IMR-90 (cell line): ENCODE measurements at regions of chr2 and their contacts with region 1.

Region 1: DNA sequence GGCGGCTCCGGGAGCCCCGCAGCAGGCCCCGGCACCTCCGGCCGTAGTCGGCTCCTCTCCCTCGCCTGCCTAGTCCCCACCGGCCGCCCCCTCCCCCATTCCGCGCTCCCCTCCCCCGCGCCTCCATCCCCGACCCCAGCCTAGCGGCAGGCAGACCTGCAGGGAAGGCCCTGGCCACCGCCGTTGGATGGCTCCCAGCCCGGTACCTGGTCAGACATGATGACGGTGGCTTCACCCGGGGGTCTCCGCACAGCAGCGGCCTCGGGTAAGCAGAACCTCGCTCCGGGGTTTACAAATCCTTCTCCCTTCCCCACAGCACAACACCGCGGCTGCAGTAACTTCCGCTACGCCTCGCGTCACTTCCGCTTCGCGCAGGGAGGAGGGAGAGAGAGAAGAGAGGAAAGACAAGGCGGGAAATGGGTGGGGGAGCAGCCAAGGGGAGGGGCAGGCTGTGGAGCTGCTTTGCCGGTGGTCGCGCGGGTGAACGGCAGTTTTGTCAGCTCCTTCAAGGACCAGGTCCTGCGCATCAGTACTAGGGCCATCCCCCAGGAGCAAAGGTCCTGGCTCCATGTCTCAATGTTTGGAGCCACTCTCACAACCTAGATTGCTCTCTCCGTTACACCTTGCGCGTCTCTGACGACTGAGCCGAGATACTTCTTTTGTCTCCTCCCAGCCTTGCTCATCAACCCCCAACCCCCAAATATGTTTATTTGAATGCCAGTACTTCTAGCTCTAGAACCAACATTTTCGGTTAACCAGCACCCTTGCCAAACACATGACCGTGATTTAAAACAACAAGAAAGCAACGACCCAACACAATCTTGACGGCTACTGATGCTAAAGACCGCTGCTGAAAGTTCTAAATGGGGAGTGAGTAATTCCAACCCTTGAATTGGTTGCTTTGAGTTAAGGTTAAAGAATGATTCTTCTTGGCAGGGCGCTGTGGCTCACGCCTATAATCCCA is at the start of gene SUMO1:
- DNase-seq: peak; percentile 87
- ATAC-seq: peak; percentile 93
- H3K4me3 ChIP-seq: peak within 1 kb of the TSS; percentile 98
- H3K27ac ChIP-seq: peak within 1 kb of the TSS; percentile 95
- H3K4me1 ChIP-seq: no peaks in the 10 kb centered on the region; the same call in 1 of the 2 replicates
- H3K27me3 ChIP-seq: no peaks in the 10 kb centered on the region
- CTCF ChIP-seq: no peak
- POLR2A ChIP-seq: no peak; the same call in none of the 2 replicates
- RAD21 ChIP-seq: no peak
- total RNA-seq, gene SUMO1: 90.0 and 158 TPM in 2 replicates

Region 2: GRCh38 chr2:200348897-200349563 is 1889.5 kb before region 1 on chr2:
- CTCF ChIA-PET with region 1: no interaction called
- POLR2A ChIA-PET with region 1: interaction called, 10 read pairs
- dilution Hi-C with region 1: no loop called
- in situ Hi-C with region 1: no loop called
- intact Hi-C with region 1: no loop called
- DNase-seq: no peak
- ATAC-seq: no peak
- H3K4me3 ChIP-seq: no peak overlapping the region
- H3K27ac ChIP-seq: no peak overlapping the region
- H3K4me1 ChIP-seq: peaks cover 26% of the 10 kb centered on the region
- H3K27me3 ChIP-seq: no peaks in the 10 kb centered on the region
- CTCF ChIP-seq: no peak
- POLR2A ChIP-seq: no peak
- RAD21 ChIP-seq: no peak